Endothelial cell of umbilical vein (primary cell): ENCODE measurements at regions of chr22 and their contacts with region 1.

Region 1: GRCh38 chr22:35995772-35996171 is 32.9 kb downstream of the RBFOX2 start:
- DNase-seq: peak; percentile 70
- H3K4me3 ChIP-seq: no peak overlapping the region
- H3K27ac ChIP-seq: peak overlapping the region; percentile 11
- H3K4me1 ChIP-seq: peaks cover 24% of the 10 kb centered on the region
- H3K27me3 ChIP-seq: no peaks in the 10 kb centered on the region
- CTCF ChIP-seq: no peak
- POLR2A ChIP-seq: no peak

Region 2: GRCh38 chr22:35961480-35962295 is 34.1 kb before region 1 on chr22:
- CTCF ChIA-PET with region 1: interaction called, 6 read pairs
- POLR2A ChIA-PET with region 1: no interaction called
- dilution Hi-C with region 1: no loop called
- intact Hi-C with region 1: loop called (anchors 5 kb)
- DNase-seq: peak; percentile 85
- H3K4me3 ChIP-seq: peak overlapping the region in 1 of 3 experiments; percentile 52
- H3K27ac ChIP-seq: peak overlapping the region; percentile 89
- H3K4me1 ChIP-seq: peaks cover 36% of the 10 kb centered on the region
- H3K27me3 ChIP-seq: no peaks in the 10 kb centered on the region
- CTCF ChIP-seq: no peak
- POLR2A ChIP-seq: no peak